Activated T-helper 1 cell treated with anti-CD3 and anti-CD28 coated beads, Interleukin-12 subunit alpha, Interleukin-12 subunit beta, Interleukin-2, Interleukin-4 antibody, amounts not matched to agents 30 ng/mL and 10 ng/mL and 1 ng/mL, durations not matched to agents 14 hours and 24 hours and 36 hours (primary cell): ENCODE measurements at regions of chr1 and their contacts with region 1.

Region 1: DNA sequence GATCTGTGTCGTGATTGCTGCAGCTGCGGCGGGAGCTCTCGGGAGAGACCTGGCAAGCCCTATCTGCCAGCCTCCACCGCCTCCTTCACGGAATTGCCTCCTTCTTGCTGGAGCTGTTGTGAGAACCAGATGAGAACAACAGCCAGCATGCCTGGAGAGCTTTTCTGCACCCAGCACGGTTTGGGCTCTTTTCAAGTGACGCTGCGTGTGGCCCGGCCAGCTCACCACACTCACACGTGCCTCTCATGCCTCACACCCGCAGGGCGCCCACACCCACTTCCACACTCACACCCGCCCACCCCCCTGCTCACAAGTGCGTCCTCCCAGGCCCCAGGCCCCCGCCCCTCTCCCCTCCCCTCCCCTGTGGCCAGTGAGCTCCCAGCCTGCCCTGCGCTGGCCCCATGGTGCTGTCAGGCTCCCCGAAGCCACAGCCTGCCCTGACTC is 135.7 kb upstream of the RUNX3 start:
- DNase-seq: no peak
- H3K4me3 Mint-ChIP-seq: no peak overlapping the region
- H3K27ac Mint-ChIP-seq: no peak overlapping the region
- H3K4me1 Mint-ChIP-seq: peaks cover 25% of the 10 kb centered on the region
- H3K27me3 Mint-ChIP-seq: peaks cover 23% of the 10 kb centered on the region

Region 2: GRCh38 chr1:25099343-25099951 is 33.6 kb after region 1 on chr1:
- intact Hi-C with region 1: loop called (anchors 2 kb)
- DNase-seq: peak; percentile 37
- H3K4me3 Mint-ChIP-seq: peak overlapping the region; percentile 68
- H3K27ac Mint-ChIP-seq: peak overlapping the region; percentile 88
- H3K4me1 Mint-ChIP-seq: peaks cover 84% of the 10 kb centered on the region
- H3K27me3 Mint-ChIP-seq: peaks cover 2% of the 10 kb centered on the region